ENCODE measurements at regions of chr2 and their contacts with region 1.

Region 1: GRCh38 chr2:38462109-38462759 is 85.2 kb upstream of the ATL2 start:
- DNase-seq: peak; percentile 70
- H3K4me3 Mint-ChIP-seq: peak overlapping the region; percentile 4
- H3K27ac Mint-ChIP-seq: peak overlapping the region; percentile 43
- H3K4me1 Mint-ChIP-seq: peaks cover 8% of the 10 kb centered on the region
- H3K27me3 Mint-ChIP-seq: peaks cover 24% of the 10 kb centered on the region

Region 2: GRCh38 chr2:38315707-38316333 is 146.4 kb before region 1 on chr2:
- intact Hi-C with region 1: loop called (anchors 2 kb)
- DNase-seq: peak; percentile 81
- H3K4me3 Mint-ChIP-seq: no peak overlapping the region
- H3K27ac Mint-ChIP-seq: no peak overlapping the region
- H3K4me1 Mint-ChIP-seq: peaks cover 13% of the 10 kb centered on the region
- H3K27me3 Mint-ChIP-seq: no peaks in the 10 kb centered on the region

Region 3: GRCh38 chr2:38394903-38395341 is 67.3 kb before region 1 on chr2:
- intact Hi-C with region 1: loop called (anchors 1 kb)
- DNase-seq: no peak
- H3K4me3 Mint-ChIP-seq: no peak overlapping the region
- H3K27ac Mint-ChIP-seq: no peak overlapping the region
- H3K4me1 Mint-ChIP-seq: peaks cover 12% of the 10 kb centered on the region
- H3K27me3 Mint-ChIP-seq: peaks cover 20% of the 10 kb centered on the region

Region 4: GRCh38 chr2:38474715-38475566 is 12.7 kb after region 1 on chr2:
- intact Hi-C with region 1: loop called (anchors 1 kb)
- DNase-seq: no peak
- H3K4me3 Mint-ChIP-seq: peak overlapping the region; percentile 10
- H3K27ac Mint-ChIP-seq: peak overlapping the region; percentile 21
- H3K4me1 Mint-ChIP-seq: peaks cover 25% of the 10 kb centered on the region
- H3K27me3 Mint-ChIP-seq: peaks cover 18% of the 10 kb centered on the region